ENCODE measurements at regions of chr19 and their contacts with region 1.

Region 1: GRCh38 chr19:51097166-51097738 is 11.0 kb downstream of the CTU1 start:
- DNase-seq: peak; percentile 67 to 78 (median 73)
- H3K4me3 ChIP-seq: no peak overlapping the region
- H3K27ac ChIP-seq: no peak overlapping the region
- H3K4me1 ChIP-seq: peaks cover 14% of the 10 kb centered on the region
- H3K27me3 ChIP-seq: no peaks in the 10 kb centered on the region
- CTCF ChIP-seq: peak; percentile 9 to 41 (median 20)
- EP300 ChIP-seq: no peak
- POLR2A ChIP-seq: no peak

Region 2: GRCh38 chr19:50922317-50922853 is 174.9 kb before region 1 on chr19:
- intact Hi-C with region 1: loop called in 1 of 4 experiments (anchors 5 kb)
- DNase-seq: peak; percentile 39 to 64 (median 52)
- H3K4me3 ChIP-seq: no peak overlapping the region
- H3K27ac ChIP-seq: no peak overlapping the region
- H3K4me1 ChIP-seq: no peaks in the 10 kb centered on the region
- H3K27me3 ChIP-seq: no peaks in the 10 kb centered on the region
- CTCF ChIP-seq: peak in 2 of 3 donors; percentile 30 to 46
- EP300 ChIP-seq: no peak
- POLR2A ChIP-seq: no peak

Region 3: DNA sequence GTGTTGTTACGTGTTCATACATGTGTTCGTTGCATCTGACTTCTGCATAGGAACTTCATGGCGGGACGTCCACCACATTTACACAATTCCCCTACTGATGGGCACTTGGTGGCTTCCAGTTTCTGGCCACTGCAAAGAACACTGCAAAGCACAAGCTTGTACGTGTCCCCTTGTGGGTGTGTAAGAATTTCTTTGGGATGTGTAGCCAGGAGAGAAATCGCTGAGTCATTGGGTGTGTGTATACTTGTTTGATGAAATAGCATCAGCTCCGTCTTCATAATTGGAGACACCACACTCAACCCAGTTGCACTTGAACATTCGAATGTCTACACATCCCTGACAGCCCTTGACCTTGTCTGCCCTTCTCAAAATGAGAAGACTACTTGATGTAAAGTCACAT is 163.6 kb before region 1 on chr19:
- intact Hi-C with region 1: loop called in 2 of 4 experiments (anchors 5 to 10 kb)
- DNase-seq: no peak
- H3K4me3 ChIP-seq: no peak overlapping the region
- H3K27ac ChIP-seq: no peak overlapping the region
- H3K4me1 ChIP-seq: no peaks in the 10 kb centered on the region
- H3K27me3 ChIP-seq: no peaks in the 10 kb centered on the region
- CTCF ChIP-seq: no peak
- EP300 ChIP-seq: no peak
- POLR2A ChIP-seq: no peak

Region 4: GRCh38 chr19:51016798-51017683 is 80.2 kb before region 1 on chr19:
- intact Hi-C with region 1: loop called in 2 of 4 experiments (anchors 2 to 5 kb)
- DNase-seq: peak; percentile 72 to 93 (median 84)
- H3K4me3 ChIP-seq: peak overlapping the region; percentile 45
- H3K27ac ChIP-seq: peak overlapping the region; percentile 59 to 94
- H3K4me1 ChIP-seq: peaks cover 3% of the 10 kb centered on the region
- H3K27me3 ChIP-seq: no peaks in the 10 kb centered on the region
- CTCF ChIP-seq: peak; percentile 59 to 86 (median 83)
- EP300 ChIP-seq: no peak
- POLR2A ChIP-seq: peak; percentile 56

Region 5: DNA sequence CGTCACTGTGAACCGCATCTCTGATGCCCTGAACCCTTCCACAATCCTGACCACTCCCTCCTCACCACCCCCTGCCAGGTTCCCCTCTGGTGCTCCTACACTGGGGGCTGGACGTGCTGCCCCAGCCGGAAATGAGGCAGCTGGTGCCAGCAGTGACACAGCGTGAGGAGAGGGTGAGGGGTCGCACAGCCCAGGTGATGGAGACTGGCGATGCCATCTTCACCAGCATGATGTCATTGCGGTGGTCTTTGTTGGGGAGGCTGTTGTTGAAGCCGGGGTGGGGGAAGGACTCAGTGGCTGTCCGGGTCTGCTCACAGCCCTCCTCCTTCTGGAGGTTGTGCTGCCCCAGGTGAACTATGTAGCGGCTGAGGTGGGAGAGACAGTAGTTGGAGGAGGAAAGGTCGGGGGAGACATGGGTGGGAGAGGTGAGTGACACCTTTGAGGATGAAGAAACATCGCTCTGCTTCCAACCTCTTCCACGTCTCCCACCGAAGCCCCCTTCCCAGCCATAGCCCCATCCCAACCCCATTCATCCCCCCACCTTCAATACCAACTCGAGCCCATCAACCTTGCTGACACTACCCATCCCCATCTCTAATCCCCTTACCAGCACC is 73.2 kb before region 1 on chr19:
- intact Hi-C with region 1: loop called in 2 of 4 experiments (anchors 2 to 5 kb)
- DNase-seq: peak in 1 of 5 donors; percentile 35
- H3K4me3 ChIP-seq: no peak overlapping the region
- H3K27ac ChIP-seq: no peak overlapping the region
- H3K4me1 ChIP-seq: peaks cover 12% of the 10 kb centered on the region
- H3K27me3 ChIP-seq: no peaks in the 10 kb centered on the region
- CTCF ChIP-seq: no peak
- EP300 ChIP-seq: no peak
- POLR2A ChIP-seq: no peak

Region 6: GRCh38 chr19:51172223-51172622 is 75.0 kb after region 1 on chr19:
- intact Hi-C with region 1: loop called in 2 of 4 experiments (anchors 5 to 10 kb)
- DNase-seq: no peak
- H3K4me3 ChIP-seq: no peak overlapping the region
- H3K27ac ChIP-seq: no peak overlapping the region
- H3K4me1 ChIP-seq: peaks cover 5% of the 10 kb centered on the region
- H3K27me3 ChIP-seq: no peaks in the 10 kb centered on the region
- CTCF ChIP-seq: no peak
- EP300 ChIP-seq: no peak
- POLR2A ChIP-seq: no peak